HAP-1 (cell line): ENCODE measurements at regions of chr4 and their contacts with region 1.

Region 1: GRCh38 chr4:25180524-25181131 is 20.4 kb upstream of the SEPSECS start:
- DNase-seq: peak; percentile 62 to 65
- H3K4me3 ChIP-seq: no peak overlapping the region
- H3K4me1 ChIP-seq: no peaks in the 10 kb centered on the region
- H3K27me3 ChIP-seq: no peaks in the 10 kb centered on the region

Region 2: DNA sequence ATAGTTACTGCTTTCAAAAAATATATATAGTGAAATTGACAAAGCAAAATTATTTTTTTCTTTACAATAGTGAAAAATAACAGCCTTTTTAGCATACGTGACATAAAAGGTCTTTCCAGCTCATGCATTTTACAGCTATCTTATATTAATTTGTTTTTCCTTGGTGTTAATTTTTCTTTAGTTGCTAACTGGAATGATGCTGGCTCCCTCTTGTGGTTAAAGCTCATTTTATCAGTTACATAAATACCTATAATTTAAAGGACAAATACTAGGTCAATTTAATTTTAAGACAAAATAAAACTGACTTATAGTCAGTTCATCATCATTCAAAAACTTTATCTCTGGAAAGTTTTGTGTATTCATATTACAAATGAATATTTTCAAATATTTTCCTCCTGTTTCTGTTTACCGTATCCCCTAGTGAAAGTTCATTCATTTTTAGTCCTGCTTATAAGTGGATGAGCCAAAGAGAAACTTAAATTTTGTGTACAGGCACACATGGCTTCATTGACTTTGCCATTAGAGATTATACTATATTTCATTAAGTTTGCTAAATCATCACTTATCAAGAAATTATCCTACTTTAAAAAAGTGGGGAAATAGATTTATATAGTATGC is 186.5 kb after region 1 on chr4:
- in situ Hi-C with region 1: loop called (anchors 25 kb)
- DNase-seq: peak in 1 of 2 experiments; percentile 41
- H3K4me3 ChIP-seq: no peak overlapping the region
- H3K4me1 ChIP-seq: peaks cover 6% of the 10 kb centered on the region; the same call in 1 of the 2 replicates
- H3K27me3 ChIP-seq: no peaks in the 10 kb centered on the region